ENCODE measurements at regions of chr1 and their contacts with region 1.

Region 1: DNA sequence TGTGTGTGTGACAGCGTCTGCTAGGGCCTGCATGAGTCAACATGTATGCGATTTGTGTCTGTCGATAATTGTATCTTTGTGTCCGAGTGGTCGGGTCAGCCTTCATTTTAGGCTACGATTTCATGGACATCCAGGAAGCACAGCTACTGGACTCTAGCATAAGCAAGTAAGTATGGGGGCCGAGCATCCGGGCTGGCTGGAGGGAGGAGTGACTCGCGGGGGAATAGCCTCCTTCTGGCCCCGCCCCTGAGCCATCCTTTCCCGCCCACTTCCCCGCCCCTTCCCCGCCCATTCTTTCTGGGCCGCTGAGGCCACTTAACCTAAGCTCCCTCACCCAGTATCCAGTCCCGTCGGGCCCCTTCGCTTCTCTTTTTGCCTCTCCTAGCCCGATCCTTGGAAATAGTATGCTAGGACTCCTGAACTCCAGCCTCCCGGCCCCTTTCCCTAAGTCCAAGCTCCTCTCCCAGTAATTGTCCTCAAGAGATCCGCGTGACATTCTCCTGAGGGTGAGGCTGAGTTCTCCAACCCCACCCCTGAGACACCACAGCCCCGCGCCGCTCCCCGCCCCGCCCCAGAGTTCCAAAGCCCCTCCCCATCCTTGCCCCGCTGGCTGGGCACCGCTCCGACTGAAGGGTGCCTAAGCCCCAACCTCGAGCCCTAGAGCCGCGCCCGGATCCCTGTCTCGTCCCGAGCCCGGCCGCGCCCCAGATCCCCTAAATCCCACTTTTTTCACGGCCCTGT is 1.2 kb downstream of the MAP3K6 start:
- DNase-seq: peak; percentile 89
- ATAC-seq: peak; percentile 69
- H3K4me3 Mint-ChIP-seq: peak overlapping the region; percentile 78
- H3K27ac Mint-ChIP-seq: peak overlapping the region; percentile 79
- H3K4me1 Mint-ChIP-seq: peaks cover 27% of the 10 kb centered on the region
- H3K27me3 Mint-ChIP-seq: peaks cover 7% of the 10 kb centered on the region

Region 2: DNA sequence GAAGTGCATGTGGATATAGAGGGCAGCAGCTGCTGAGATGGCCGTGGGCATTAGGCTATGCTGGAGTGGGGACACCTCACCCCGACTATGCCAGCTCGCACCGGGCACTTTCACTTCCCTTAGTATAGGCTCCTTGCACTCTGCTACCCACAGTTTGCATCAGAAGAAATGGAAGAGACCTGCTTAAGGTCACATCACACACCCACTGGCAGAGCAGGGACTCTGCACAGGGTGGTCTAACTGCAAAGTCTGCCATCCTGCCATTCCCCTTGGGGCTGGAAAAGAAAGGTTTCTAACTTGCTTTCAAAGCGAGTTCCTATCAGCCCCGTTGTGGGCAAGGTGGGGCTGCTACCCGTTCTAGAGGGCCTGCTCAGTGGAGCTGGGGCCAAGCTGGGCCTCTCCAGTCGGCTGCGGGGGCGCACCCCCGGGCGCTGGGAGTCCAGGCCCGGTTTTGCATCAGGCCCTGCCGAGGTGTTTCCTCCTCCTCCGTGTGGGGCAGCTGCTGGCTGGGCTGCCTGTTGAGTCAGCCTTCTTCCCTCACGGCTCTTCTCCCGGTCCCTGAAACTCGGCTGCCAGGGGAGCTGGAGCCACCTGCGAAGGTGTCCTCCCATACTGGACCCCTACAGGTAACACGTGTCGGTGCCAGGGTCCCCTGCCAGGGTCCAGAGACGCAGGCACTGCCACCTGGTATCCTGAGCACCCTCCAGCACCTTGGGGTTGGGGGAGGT is 23.9 kb before region 1 on chr1 and contains the start of gene SYTL1:
- CTCF ChIA-PET with region 1: interaction called, 136 read pairs
- DNase-seq: peak; percentile 86
- ATAC-seq: peak; percentile 77
- H3K4me3 Mint-ChIP-seq: peak within 1 kb of the TSS; percentile 86
- H3K27ac Mint-ChIP-seq: peak within 1 kb of the TSS; percentile 84
- H3K4me1 Mint-ChIP-seq: peaks cover 34% of the 10 kb centered on the region
- H3K27me3 Mint-ChIP-seq: no peaks in the 10 kb centered on the region
- total RNA-seq, gene SYTL1: 60.7 to 85.3 TPM

Region 3: GRCh38 chr1:27349784-27350662 is 15.5 kb before region 1 on chr1:
- CTCF ChIA-PET with region 1: interaction called, 136 read pairs
- DNase-seq: no peak
- ATAC-seq: no peak
- H3K4me3 Mint-ChIP-seq: no peak overlapping the region
- H3K27ac Mint-ChIP-seq: no peak overlapping the region
- H3K4me1 Mint-ChIP-seq: peaks cover 5% of the 10 kb centered on the region
- H3K27me3 Mint-ChIP-seq: no peaks in the 10 kb centered on the region